ENCODE measurements at regions of chr15 and their contacts with region 1.

Region 1: GRCh38 chr15:70488002-70488605 is 275.3 kb downstream of the UACA start:
- DNase-seq: peak; percentile 85 to 88
- H3K4me3 ChIP-seq: no peak overlapping the region
- H3K27ac ChIP-seq: no peak overlapping the region
- H3K4me1 ChIP-seq: peaks cover 8 to 54% (median 13%) of the 10 kb centered on the region in 4 donors
- H3K27me3 ChIP-seq: no peaks in the 10 kb centered on the region
- CTCF ChIP-seq: peak in 5 of 7 experiments; percentile 95 to 99 (median 98)
- EP300 ChIP-seq: no peak
- POLR2A ChIP-seq: no peak

Region 2: GRCh38 chr15:69475769-69476358 is 1012.2 kb before region 1 on chr15:
- intact Hi-C with region 1: loop called (anchors 5 kb)
- DNase-seq: peak; percentile 87 to 91
- H3K4me3 ChIP-seq: no peak overlapping the region
- H3K27ac ChIP-seq: no peak overlapping the region
- H3K4me1 ChIP-seq: peaks cover 0 to 17% (median 2%) of the 10 kb centered on the region in 4 donors
- H3K27me3 ChIP-seq: no peaks in the 10 kb centered on the region
- CTCF ChIP-seq: peak in 5 of 7 experiments; percentile 82 to 96 (median 95)
- EP300 ChIP-seq: no peak
- POLR2A ChIP-seq: no peak

Region 3: GRCh38 chr15:69576035-69576526 is 912.0 kb before region 1 on chr15:
- intact Hi-C with region 1: loop called (anchors 5 kb)
- DNase-seq: peak; percentile 74 to 77
- H3K4me3 ChIP-seq: no peak overlapping the region
- H3K27ac ChIP-seq: peak overlapping the region in 2 of 5 donors; percentile 20 to 48
- H3K4me1 ChIP-seq: peaks cover 19 to 55% (median 43%) of the 10 kb centered on the region in 4 donors
- H3K27me3 ChIP-seq: no peaks in the 10 kb centered on the region
- CTCF ChIP-seq: peak in 5 of 7 experiments; percentile 50 to 87 (median 69)
- EP300 ChIP-seq: no peak
- POLR2A ChIP-seq: no peak

Region 4: DNA sequence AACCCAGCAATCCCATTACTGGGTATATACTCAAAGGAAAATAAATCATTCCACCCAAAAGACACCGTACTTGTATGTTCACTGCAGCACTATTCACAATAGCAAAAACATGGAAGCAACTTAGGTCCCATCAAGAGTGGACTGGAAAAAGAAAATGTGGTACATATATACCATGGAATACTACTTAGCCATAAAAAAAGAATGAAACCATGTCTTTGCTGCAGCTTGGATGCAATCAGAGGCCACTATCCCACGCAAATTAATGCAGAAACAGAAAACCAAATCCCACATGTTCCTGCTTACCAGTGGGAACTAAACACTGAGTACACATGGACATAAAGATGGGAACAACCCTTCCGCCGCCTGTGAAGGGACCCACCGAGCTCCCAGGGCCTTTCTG is 241.1 kb after region 1 on chr15:
- intact Hi-C with region 1: no loop called
- DNase-seq: no peak
- H3K4me3 ChIP-seq: no peak overlapping the region
- H3K27ac ChIP-seq: no peak overlapping the region
- H3K4me1 ChIP-seq: peaks cover 0 to 20% (median 2%) of the 10 kb centered on the region in 4 donors
- H3K27me3 ChIP-seq: no peaks in the 10 kb centered on the region
- CTCF ChIP-seq: no peak
- EP300 ChIP-seq: no peak
- POLR2A ChIP-seq: no peak

Measured in stomach (tissue), 19 donors.